CD8-positive, alpha-beta T cell (primary cell): ENCODE measurements at regions of chr1 and their contacts with region 1.

Region 1: GRCh38 chr1:182249201-182249676 is 142.4 kb downstream of the GLUL start:
- DNase-seq: no peak
- ATAC-seq: no peak
- H3K4me3 ChIP-seq: no peak overlapping the region
- H3K4me3 Mint-ChIP-seq: no peak overlapping the region
- H3K27ac ChIP-seq: no peak overlapping the region
- H3K27ac Mint-ChIP-seq: no peak overlapping the region
- H3K4me1 ChIP-seq: no peaks in the 10 kb centered on the region
- H3K4me1 Mint-ChIP-seq: peaks cover 2% of the 10 kb centered on the region
- H3K27me3 ChIP-seq: no peaks in the 10 kb centered on the region
- H3K27me3 Mint-ChIP-seq: peaks cover 2% of the 10 kb centered on the region
- CTCF ChIP-seq: no peak

Region 2: GRCh38 chr1:182299728-182300616 is 50.7 kb after region 1 on chr1:
- CTCF ChIA-PET with region 1: no interaction called
- POLR2A ChIA-PET with region 1: no interaction called
- intact Hi-C with region 1: loop called in 1 of 2 experiments (anchors 10 kb)
- DNase-seq: peak in 3 of 9 experiments; percentile 13 to 37 (median 36)
- ATAC-seq: peak; percentile 47
- H3K4me3 ChIP-seq: no peak overlapping the region
- H3K4me3 Mint-ChIP-seq: no peak overlapping the region
- H3K27ac ChIP-seq: no peak overlapping the region
- H3K27ac Mint-ChIP-seq: peak overlapping the region; percentile 15
- H3K4me1 ChIP-seq: peaks cover 3% of the 10 kb centered on the region
- H3K4me1 Mint-ChIP-seq: peaks cover 25% of the 10 kb centered on the region
- H3K27me3 ChIP-seq: no peaks in the 10 kb centered on the region
- H3K27me3 Mint-ChIP-seq: no peaks in the 10 kb centered on the region
- CTCF ChIP-seq: no peak